Activated naive CD4-positive, alpha-beta T cell treated with anti-CD3 and anti-CD28 coated beads, Interleukin-2, amount 10 ng/mL, durations not matched to agents 7 days and 5 days (primary cell): ENCODE measurements at regions of chr6 and their contacts with region 1.

Region 1: DNA sequence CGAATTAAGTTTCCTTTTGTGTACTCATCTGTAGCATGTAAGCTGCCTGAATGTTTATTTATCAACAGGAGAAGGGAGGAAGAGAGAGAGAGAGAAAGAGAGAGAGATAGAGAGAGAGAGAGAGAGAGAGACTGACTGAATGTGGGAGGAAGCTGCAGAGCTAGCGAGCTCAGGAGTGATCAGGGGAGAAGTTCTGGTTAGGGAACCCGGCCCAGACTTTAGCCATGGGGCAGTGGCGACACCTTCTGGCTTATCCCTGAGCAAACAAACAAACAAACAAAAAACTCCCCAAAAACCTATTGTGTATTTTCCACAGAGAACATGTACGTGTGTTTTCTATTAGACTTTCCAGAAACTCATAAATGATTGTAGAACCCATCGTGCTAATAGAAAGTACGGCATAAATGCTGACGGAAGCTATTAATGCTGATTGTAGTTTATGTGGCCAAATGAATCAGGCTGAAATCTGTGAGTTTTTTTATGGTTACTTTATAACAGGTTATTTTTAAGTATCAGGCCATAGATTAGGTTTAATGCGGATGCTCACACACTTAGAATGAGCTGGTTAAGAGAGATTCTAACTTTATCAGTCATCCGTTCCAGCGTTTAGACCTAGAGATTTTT is 92.8 kb downstream of the CLIC5 start:
- DNase-seq: peak; percentile 77
- H3K4me3 Mint-ChIP-seq: no peak overlapping the region
- H3K27ac Mint-ChIP-seq: peak overlapping the region; percentile 11
- H3K4me1 Mint-ChIP-seq: peaks cover 22% of the 10 kb centered on the region
- H3K27me3 Mint-ChIP-seq: no peaks in the 10 kb centered on the region

Region 2: DNA sequence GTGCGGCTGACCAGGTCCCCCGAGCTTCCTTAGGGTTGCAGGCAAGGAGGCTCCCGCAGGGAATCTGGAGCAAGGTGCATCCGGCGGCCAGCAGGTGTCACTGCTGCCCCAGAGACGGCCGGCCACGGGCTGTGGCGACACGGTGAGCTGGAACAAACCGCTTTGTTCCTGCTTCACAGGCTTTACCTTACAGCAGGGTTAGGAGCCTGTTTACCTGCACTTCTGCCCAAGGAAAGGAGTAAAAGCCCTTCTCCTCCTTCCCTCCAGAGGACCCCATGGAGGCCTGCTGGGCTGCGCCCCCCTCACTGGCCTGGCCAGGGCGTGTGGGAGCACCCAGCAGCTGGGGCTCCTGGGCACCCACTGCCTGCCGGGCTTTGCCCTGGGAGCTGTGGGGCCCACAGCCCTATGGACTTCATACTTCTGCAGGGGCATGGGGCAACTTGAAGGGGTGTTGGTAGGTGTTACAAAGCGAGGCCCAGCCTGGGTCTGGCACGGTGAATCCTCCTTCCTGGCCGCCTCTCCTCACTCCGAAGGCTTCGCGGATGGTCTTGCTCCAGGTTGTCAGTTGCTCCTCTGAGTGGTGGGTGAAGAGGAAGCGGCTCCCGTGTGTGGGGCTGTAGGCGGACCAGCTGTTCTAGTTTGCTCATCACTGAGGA is 1446.9 kb before region 1 on chr6:
- CTCF ChIA-PET with region 1: interaction called, 31 read pairs
- DNase-seq: peak; percentile 79
- H3K4me3 Mint-ChIP-seq: no peak overlapping the region
- H3K27ac Mint-ChIP-seq: no peak overlapping the region
- H3K4me1 Mint-ChIP-seq: no peaks in the 10 kb centered on the region
- H3K27me3 Mint-ChIP-seq: peaks cover 47% of the 10 kb centered on the region

Region 3: DNA sequence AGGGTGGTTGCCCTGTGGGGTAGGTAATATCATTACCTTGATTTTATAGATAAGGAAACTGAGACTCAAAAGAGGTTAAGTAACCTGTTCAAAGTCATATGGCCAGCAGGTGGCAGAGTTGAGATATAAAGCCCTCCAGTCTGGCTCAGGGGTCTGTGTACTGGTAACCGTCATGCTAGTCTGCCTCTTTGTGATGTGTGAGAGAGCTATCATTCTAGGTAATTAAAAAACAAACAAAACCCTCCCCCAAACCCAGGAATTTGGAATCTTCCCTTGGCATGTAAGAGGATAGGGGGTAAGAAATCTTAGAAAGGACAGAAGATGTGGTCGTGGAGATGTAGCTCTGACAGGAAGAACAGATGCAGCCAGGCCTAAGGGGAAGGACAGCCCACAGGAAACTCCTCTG is 1329.3 kb before region 1 on chr6:
- CTCF ChIA-PET with region 1: interaction called, 16 read pairs
- DNase-seq: peak; percentile 73
- H3K4me3 Mint-ChIP-seq: no peak overlapping the region
- H3K27ac Mint-ChIP-seq: no peak overlapping the region
- H3K4me1 Mint-ChIP-seq: peaks cover 3% of the 10 kb centered on the region
- H3K27me3 Mint-ChIP-seq: peaks cover 29% of the 10 kb centered on the region

Region 4: GRCh38 chr6:44630125-44631028 is 1292.5 kb before region 1 on chr6:
- CTCF ChIA-PET with region 1: interaction called, 24 read pairs
- DNase-seq: peak; percentile 53
- H3K4me3 Mint-ChIP-seq: no peak overlapping the region
- H3K27ac Mint-ChIP-seq: no peak overlapping the region
- H3K4me1 Mint-ChIP-seq: peaks cover 24% of the 10 kb centered on the region
- H3K27me3 Mint-ChIP-seq: peaks cover 20% of the 10 kb centered on the region

Region 5: GRCh38 chr6:45421709-45422502 is 500.9 kb before region 1 on chr6:
- CTCF ChIA-PET with region 1: interaction called, 12 read pairs
- DNase-seq: peak; percentile 57
- H3K4me3 Mint-ChIP-seq: peak overlapping the region; percentile 91
- H3K27ac Mint-ChIP-seq: peak overlapping the region; percentile 87
- H3K4me1 Mint-ChIP-seq: peaks cover 35% of the 10 kb centered on the region
- H3K27me3 Mint-ChIP-seq: peaks cover 61% of the 10 kb centered on the region

Region 6: GRCh38 chr6:45714741-45715507 is 207.9 kb before region 1 on chr6:
- CTCF ChIA-PET with region 1: interaction called, 33 read pairs
- DNase-seq: peak; percentile 69
- H3K4me3 Mint-ChIP-seq: no peak overlapping the region
- H3K27ac Mint-ChIP-seq: peak overlapping the region; percentile 58
- H3K4me1 Mint-ChIP-seq: peaks cover 37% of the 10 kb centered on the region
- H3K27me3 Mint-ChIP-seq: peaks cover 16% of the 10 kb centered on the region

Region 7: DNA sequence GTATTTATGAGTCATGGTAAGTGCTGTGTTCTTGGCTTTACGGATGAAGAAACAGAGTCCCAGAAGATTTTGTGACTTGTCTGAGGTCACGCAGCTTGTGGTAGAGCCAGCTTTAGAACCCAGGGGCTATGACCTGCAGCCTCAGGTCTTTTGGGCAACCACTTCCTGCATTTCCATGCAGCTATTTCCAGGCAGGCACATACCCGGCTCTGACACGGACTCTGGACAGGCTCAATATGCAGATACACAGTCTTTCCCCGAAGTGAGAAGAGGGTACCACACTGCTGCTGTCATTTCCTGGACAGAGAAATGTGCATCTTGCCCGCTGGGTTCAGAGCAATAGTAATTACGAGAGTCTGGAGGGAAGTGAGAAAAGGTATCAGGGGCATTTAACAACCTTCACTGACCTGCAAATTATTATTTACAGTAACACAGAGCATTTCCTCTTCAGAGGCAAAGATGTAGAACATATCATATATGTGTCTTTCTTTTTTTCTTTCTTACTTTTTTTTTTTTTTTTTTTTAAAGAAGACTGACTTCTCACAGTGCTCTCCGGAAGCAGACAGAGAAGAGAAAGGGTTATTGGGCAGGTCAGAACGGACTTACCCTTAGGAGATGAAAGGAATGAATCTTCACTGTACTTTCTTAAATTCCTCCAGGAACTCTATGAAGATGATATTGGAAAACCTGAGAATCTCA is 92.2 kb before region 1 on chr6:
- CTCF ChIA-PET with region 1: interaction called, 11 read pairs
- DNase-seq: peak; percentile 49
- H3K4me3 Mint-ChIP-seq: peak overlapping the region; percentile 24
- H3K27ac Mint-ChIP-seq: no peak overlapping the region
- H3K4me1 Mint-ChIP-seq: peaks cover 40% of the 10 kb centered on the region
- H3K27me3 Mint-ChIP-seq: no peaks in the 10 kb centered on the region

Region 8: GRCh38 chr6:46011241-46012085 is 88.6 kb after region 1 on chr6:
- CTCF ChIA-PET with region 1: no interaction called
- DNase-seq: peak; percentile 82
- H3K4me3 Mint-ChIP-seq: peak overlapping the region; percentile 36
- H3K27ac Mint-ChIP-seq: peak overlapping the region; percentile 90
- H3K4me1 Mint-ChIP-seq: peaks cover 64% of the 10 kb centered on the region
- H3K27me3 Mint-ChIP-seq: peaks cover 19% of the 10 kb centered on the region